ENCODE measurements at regions of chr2 and their contacts with region 1.

Region 1: GRCh38 chr2:68751397-68752339 is 17.1 kb downstream of the ARHGAP25 start:
- DNase-seq: peak; percentile 87
- ATAC-seq: peak; percentile 92
- H3K4me3 ChIP-seq: no peak overlapping the region
- H3K27ac ChIP-seq: no peak overlapping the region
- H3K4me1 ChIP-seq: no peaks in the 10 kb centered on the region
- H3K27me3 ChIP-seq: no peaks in the 10 kb centered on the region
- CTCF ChIP-seq: peak; percentile 95
- POLR2A ChIP-seq: no peak
- RAD21 ChIP-seq: peak; percentile 95

Region 2: GRCh38 chr2:68345129-68345875 is 406.4 kb before region 1 on chr2:
- CTCF ChIA-PET with region 1: no interaction called
- POLR2A ChIA-PET with region 1: no interaction called
- dilution Hi-C with region 1: no loop called
- in situ Hi-C with region 1: no loop called
- intact Hi-C with region 1: no loop called
- DNase-seq: peak; percentile 10
- ATAC-seq: no peak
- H3K4me3 ChIP-seq: no peak overlapping the region
- H3K27ac ChIP-seq: no peak overlapping the region
- H3K4me1 ChIP-seq: no peaks in the 10 kb centered on the region
- H3K27me3 ChIP-seq: no peaks in the 10 kb centered on the region
- CTCF ChIP-seq: no peak
- POLR2A ChIP-seq: no peak
- RAD21 ChIP-seq: no peak

Region 3: GRCh38 chr2:68404893-68405799 is 346.5 kb before region 1 on chr2:
- CTCF ChIA-PET with region 1: no interaction called
- POLR2A ChIA-PET with region 1: no interaction called
- dilution Hi-C with region 1: no loop called
- in situ Hi-C with region 1: no loop called
- intact Hi-C with region 1: no loop called
- DNase-seq: no peak
- ATAC-seq: no peak
- H3K4me3 ChIP-seq: no peak overlapping the region
- H3K27ac ChIP-seq: no peak overlapping the region
- H3K4me1 ChIP-seq: no peaks in the 10 kb centered on the region
- H3K27me3 ChIP-seq: peaks cover 23% of the 10 kb centered on the region
- CTCF ChIP-seq: no peak
- POLR2A ChIP-seq: no peak
- RAD21 ChIP-seq: no peak

Region 4: DNA sequence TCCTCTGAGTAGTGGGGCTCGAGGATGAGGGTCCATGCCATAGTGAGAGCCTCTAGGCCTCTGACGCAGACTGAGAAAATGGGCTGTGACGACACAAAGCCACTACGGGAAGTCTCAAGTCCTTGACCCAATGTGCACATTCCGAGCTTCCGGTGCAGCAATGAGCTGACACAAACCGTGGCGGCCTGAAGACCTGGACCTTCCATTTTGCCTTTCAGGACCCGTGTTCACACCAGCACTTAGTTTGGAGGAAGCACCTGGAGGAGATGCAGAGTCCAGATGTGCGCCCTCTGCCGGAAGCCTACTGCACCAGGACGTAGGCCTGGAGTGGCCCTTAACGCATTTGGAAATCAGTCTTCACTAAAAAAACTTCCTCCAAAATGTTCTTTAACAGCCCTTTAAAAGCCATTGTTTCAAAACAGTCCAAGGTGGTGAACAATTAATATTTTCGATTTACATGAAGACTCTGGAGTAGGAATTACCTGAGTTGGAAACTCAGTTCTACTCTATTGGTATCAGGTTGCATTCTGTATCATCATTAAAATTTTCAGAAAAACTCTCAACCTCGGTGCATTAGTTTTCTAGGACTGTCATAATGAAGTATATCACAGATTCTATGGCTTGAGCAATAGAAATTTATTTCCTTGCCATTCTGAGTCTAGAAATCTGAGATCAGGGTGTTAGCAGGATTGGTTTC is 85.6 kb after region 1 on chr2:
- CTCF ChIA-PET with region 1: interaction called, 4 read pairs
- POLR2A ChIA-PET with region 1: no interaction called
- dilution Hi-C with region 1: no loop called
- in situ Hi-C with region 1: no loop called
- intact Hi-C with region 1: loop called (anchors 2 kb)
- DNase-seq: peak; percentile 27
- ATAC-seq: peak; percentile 48; the same call in 1 of the 2 replicates
- H3K4me3 ChIP-seq: no peak overlapping the region
- H3K27ac ChIP-seq: no peak overlapping the region
- H3K4me1 ChIP-seq: peaks cover 5% of the 10 kb centered on the region
- H3K27me3 ChIP-seq: no peaks in the 10 kb centered on the region
- CTCF ChIP-seq: peak; percentile 49
- POLR2A ChIP-seq: no peak
- RAD21 ChIP-seq: peak; percentile 57

Region 5: DNA sequence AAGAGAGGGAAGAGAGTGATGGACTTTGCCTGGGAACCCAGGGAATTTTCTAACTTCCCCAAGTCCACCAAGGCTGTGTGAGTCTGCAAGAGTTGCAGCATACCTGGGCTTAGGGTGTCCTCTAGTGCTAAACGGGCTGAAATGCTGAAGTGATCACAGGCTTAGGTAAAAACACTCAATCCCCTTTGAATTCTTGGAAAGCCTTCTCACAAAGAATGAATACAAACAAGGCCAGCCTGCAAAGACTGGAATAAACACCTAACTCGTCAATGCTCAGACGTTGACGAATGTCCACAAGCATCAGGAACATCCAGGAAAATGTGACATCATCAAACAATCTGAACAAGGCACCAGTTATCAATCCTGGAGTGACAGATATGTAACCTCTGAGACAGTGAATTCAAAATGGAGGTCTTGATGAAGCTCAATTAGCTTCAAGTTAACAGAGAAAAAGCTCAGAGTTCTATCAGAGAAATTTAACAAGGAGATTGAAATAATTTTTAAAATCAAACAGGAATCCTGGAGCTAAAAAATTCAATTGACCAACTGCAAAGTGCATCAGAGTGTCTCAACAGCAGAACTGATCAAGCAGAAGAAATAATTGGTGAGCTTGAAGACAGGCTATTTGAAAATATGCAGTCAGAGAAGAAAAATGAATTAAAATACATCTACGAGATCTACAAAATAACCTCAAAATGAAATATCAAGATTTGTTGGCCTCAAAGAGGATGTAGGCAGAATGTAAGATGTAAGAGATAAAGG is 149.7 kb after region 1 on chr2:
- CTCF ChIA-PET with region 1: interaction called, 13 read pairs
- POLR2A ChIA-PET with region 1: no interaction called
- dilution Hi-C with region 1: no loop called
- in situ Hi-C with region 1: no loop called
- intact Hi-C with region 1: no loop called
- DNase-seq: peak; percentile 42
- ATAC-seq: peak; percentile 37; the same call in 1 of the 2 replicates
- H3K4me3 ChIP-seq: no peak overlapping the region
- H3K27ac ChIP-seq: no peak overlapping the region
- H3K4me1 ChIP-seq: no peaks in the 10 kb centered on the region
- H3K27me3 ChIP-seq: no peaks in the 10 kb centered on the region
- CTCF ChIP-seq: peak; percentile 39
- POLR2A ChIP-seq: no peak
- RAD21 ChIP-seq: peak; percentile 69

Region 6: GRCh38 chr2:68909793-68910674 is 158.4 kb after region 1 on chr2:
- CTCF ChIA-PET with region 1: interaction called, 13 read pairs
- POLR2A ChIA-PET with region 1: no interaction called
- dilution Hi-C with region 1: no loop called
- in situ Hi-C with region 1: loop called (anchors 5 kb)
- intact Hi-C with region 1: loop called (anchors 1 kb)
- DNase-seq: peak; percentile 82
- ATAC-seq: peak; percentile 83
- H3K4me3 ChIP-seq: no peak overlapping the region
- H3K27ac ChIP-seq: no peak overlapping the region
- H3K4me1 ChIP-seq: peaks cover 10% of the 10 kb centered on the region
- H3K27me3 ChIP-seq: no peaks in the 10 kb centered on the region
- CTCF ChIP-seq: peak; percentile 90
- POLR2A ChIP-seq: no peak
- RAD21 ChIP-seq: peak; percentile 95

Region 7: GRCh38 chr2:68925295-68925896 is 173.7 kb after region 1 on chr2:
- CTCF ChIA-PET with region 1: interaction called, 8 read pairs
- POLR2A ChIA-PET with region 1: no interaction called
- dilution Hi-C with region 1: no loop called
- in situ Hi-C with region 1: no loop called
- intact Hi-C with region 1: loop called (anchors 1 kb)
- DNase-seq: peak; percentile 64
- ATAC-seq: peak; percentile 67; the same call in 1 of the 2 replicates
- H3K4me3 ChIP-seq: no peak overlapping the region
- H3K27ac ChIP-seq: no peak overlapping the region
- H3K4me1 ChIP-seq: peaks cover 3% of the 10 kb centered on the region
- H3K27me3 ChIP-seq: no peaks in the 10 kb centered on the region; the same call in 1 of the 2 replicates
- CTCF ChIP-seq: peak; percentile 96
- POLR2A ChIP-seq: peak; percentile 20; the same call in 1 of the 2 replicates
- RAD21 ChIP-seq: peak; percentile 96

Measured in IMR-90 (cell line).